Panc1 (cell line): ENCODE measurements at regions of chr3 and their contacts with region 1.

Region 1: DNA sequence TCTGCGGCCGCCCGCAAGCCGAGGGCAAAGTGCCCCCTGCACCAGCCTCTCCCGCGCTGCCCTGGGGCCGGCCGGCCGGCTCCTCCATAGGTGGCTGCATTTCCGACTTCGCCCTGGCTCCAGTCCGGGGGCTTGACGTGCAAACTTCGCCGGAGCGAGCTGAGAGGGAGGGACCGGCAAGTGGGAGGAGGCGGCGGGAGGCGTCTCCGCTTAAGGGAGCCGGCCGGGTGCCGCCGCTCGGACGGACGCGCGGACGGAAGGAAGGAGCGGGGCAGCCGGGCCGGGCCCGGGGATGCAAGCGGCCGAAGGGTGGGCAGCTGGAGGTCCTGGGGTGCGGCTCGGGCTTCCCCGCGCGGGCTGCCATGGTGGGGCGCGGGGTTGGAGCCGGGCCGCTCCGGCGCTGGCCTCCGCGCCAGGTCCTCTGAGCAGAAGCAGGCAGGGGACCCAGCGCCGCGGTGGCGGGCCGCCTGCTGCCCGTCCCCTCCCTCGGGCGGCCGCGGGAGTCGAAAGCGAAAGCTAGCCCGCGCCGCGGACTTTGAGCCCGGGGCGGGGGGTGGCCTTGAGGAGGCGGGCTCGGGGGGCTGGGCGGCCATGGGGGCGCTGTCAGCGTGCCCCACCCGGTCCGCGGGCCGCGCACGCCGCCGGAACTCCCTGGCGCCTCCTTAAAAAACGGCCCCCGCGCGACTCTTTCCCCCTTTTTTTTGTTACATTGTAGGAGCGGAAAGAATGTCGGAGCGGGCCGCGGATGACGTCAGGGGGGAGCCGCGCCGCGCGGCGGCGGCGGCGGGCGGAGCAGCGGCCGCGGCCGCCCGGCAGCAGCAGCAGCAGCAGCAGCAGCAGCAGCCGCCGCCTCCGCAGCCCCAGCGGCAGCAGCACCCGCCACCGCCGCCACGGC is at the start of gene SCAANT1:
- DNase-seq: no peak
- ATAC-seq: peak; percentile 89
- H3K4me3 ChIP-seq: peak within 1 kb of the TSS; percentile 58 to 70
- H3K27ac ChIP-seq: peak within 1 kb of the TSS; percentile 77
- H3K4me1 ChIP-seq: peaks cover 12% of the 10 kb centered on the region
- H3K27me3 ChIP-seq: no peaks in the 10 kb centered on the region
- CTCF ChIP-seq: 0 out of 2 replicates have a peak, but pooled peaks have one; percentile 18
- total RNA-seq, gene SCAANT1: not detected

Region 2: DNA sequence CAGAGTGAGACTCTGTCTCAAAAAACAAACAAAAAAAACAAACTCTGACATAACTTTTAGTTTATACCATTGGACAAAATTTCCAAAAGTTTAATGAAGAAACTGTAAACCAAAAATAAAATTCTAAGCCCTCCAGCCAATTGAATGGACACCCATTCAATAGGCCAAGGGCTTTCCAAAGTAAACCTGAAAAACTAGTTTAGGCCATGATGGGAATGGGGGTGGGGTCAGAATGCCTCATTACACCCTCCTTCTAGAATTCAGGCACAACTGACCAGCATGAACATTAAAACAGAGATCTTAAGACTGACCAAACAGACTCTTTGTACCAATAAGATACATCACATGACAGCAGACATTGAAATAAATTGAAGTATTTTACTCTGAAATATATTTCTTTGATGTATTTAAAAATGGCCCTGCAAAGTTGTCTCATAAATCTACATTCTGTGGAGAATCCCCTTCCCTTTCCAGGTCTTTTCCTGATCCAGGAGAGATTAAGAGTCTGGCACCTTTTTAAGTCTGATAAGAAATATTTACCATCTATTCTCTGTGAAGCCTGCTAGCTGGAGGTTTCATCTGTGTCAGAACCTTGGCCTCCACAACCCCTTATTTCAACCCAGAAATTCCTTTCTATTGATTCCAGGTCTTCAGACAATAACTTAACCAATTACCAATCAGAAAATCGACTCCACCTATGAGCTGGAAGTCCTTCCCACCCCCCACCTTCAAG is 64.2 kb before region 1 on chr3:
- CTCF ChIA-PET with region 1: interaction called, 10 read pairs
- POLR2A ChIA-PET with region 1: no interaction called
- in situ Hi-C with region 1: no loop called
- intact Hi-C with region 1: no loop called
- DNase-seq: no peak
- ATAC-seq: no peak
- H3K4me3 ChIP-seq: no peak overlapping the region
- H3K27ac ChIP-seq: no peak overlapping the region
- H3K4me1 ChIP-seq: no peaks in the 10 kb centered on the region
- H3K27me3 ChIP-seq: no peaks in the 10 kb centered on the region
- CTCF ChIP-seq: no peak